GM18951 (cell line): ENCODE measurements at regions of chrX and their contacts with region 1.

Region 1: GRCh38 chrX:130916636-130917422 is 13.8 kb upstream of the ENOX2 start:
- POLR2A ChIP-seq: no peak

Region 2: GRCh38 chrX:130552444-130553073 is 364.3 kb before region 1 on chrX:
- in situ Hi-C with region 1: loop called (anchors 10 kb)
- POLR2A ChIP-seq: no peak

Region 3: DNA sequence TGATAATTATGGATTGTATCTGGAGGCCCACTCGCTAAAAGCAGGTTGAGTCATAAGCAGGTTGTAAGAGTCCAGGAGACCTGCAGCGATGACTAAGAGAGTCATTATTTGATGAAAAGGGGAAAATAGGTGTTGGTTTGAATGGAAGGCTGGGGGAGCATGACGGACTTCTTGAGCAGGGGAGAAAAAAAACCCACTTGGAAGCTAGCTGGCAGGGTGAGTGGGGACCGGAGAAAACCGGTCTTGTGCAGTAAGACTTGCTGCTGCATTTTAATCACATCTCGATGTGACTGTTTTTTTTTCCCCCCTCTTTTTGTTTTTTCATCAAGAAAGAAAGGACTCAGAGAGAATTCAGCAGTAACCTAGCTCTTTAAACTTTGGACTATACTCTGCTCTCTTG is 282.3 kb after region 1 on chrX:
- in situ Hi-C with region 1: no loop called
- POLR2A ChIP-seq: no peak